K562 (cell line): ENCODE measurements at regions of chr1 and their contacts with region 1.

Region 1: GRCh38 chr1:43706598-43707495 is 489 bp upstream of the ST3GAL3 start:
- DNase-seq: peak; percentile 98 to 99 (median 98)
- ATAC-seq: peak; percentile 97
- H3K4me3 ChIP-seq: peak overlapping the region; percentile 75
- H3K27ac ChIP-seq: peak overlapping the region; percentile 82
- H3K4me1 ChIP-seq: peaks cover 16 to 20% of the 10 kb centered on the region in 2 experiments
- H3K27me3 ChIP-seq: no peaks in the 10 kb centered on the region
- CTCF ChIP-seq: no peak
- EP300 ChIP-seq: no peak
- POLR2A ChIP-seq: peak; percentile 98
- RAD21 ChIP-seq: no peak

Region 2: GRCh38 chr1:43688594-43689000 is 18.2 kb before region 1 on chr1:
- CTCF ChIA-PET with region 1: no interaction called
- POLR2A ChIA-PET with region 1: interaction called, 25 read pairs
- in situ Hi-C with region 1: no loop called
- intact Hi-C with region 1: no loop called
- DNase-seq: peak in 1 of 4 experiments; percentile 23
- ATAC-seq: peak; percentile 36; the same call in 2 of the 3 replicates
- H3K4me3 ChIP-seq: no peak overlapping the region
- H3K27ac ChIP-seq: no peak overlapping the region
- H3K4me1 ChIP-seq: no peaks in the 10 kb centered on the region; a peak in 1 of 5 replicates
- H3K27me3 ChIP-seq: no peaks in the 10 kb centered on the region
- CTCF ChIP-seq: no peak
- EP300 ChIP-seq: no peak
- POLR2A ChIP-seq: no peak
- RAD21 ChIP-seq: no peak